Endothelial cell of umbilical vein (primary cell): ENCODE measurements at regions of chr15 and their contacts with region 1.

Region 1: GRCh38 chr15:75647370-75648155 is at the start of gene SNX33:
- DNase-seq: peak; percentile 76
- H3K4me3 ChIP-seq: peak within 1 kb of the TSS; percentile 53 to 72 (median 64)
- H3K27ac ChIP-seq: peak within 1 kb of the TSS; percentile 37
- H3K4me1 ChIP-seq: peaks cover 29% of the 10 kb centered on the region
- H3K27me3 ChIP-seq: no peaks in the 10 kb centered on the region
- CTCF ChIP-seq: peak; percentile 67 to 74
- POLR2A ChIP-seq: no peak
- total RNA-seq, gene SNX33: 10.6 and 12.6 TPM in 2 replicates

Region 2: GRCh38 chr15:75367913-75368688 is 279.5 kb before region 1 on chr15 and contains the start of gene MAN2C1:
- CTCF ChIA-PET with region 1: interaction called, 13 read pairs
- POLR2A ChIA-PET with region 1: no interaction called
- dilution Hi-C with region 1: no loop called
- intact Hi-C with region 1: no loop called
- DNase-seq: peak; percentile 93
- H3K4me3 ChIP-seq: peak within 1 kb of the TSS; percentile 50 to 83 (median 51)
- H3K27ac ChIP-seq: peak within 1 kb of the TSS; percentile 79
- H3K4me1 ChIP-seq: peaks cover 15% of the 10 kb centered on the region
- H3K27me3 ChIP-seq: no peaks in the 10 kb centered on the region
- CTCF ChIP-seq: peak; percentile 63 to 76
- POLR2A ChIP-seq: peak; percentile 93
- total RNA-seq, gene MAN2C1: 248 TPM in 2 replicates

Region 3: GRCh38 chr15:75578948-75579920 is 68.3 kb before region 1 on chr15 and contains the start of gene PTPN9:
- CTCF ChIA-PET with region 1: interaction called, 11 read pairs
- POLR2A ChIA-PET with region 1: no interaction called
- dilution Hi-C with region 1: no loop called
- intact Hi-C with region 1: no loop called
- DNase-seq: peak; percentile 73
- H3K4me3 ChIP-seq: peak within 1 kb of the TSS; percentile 64 to 99 (median 97)
- H3K27ac ChIP-seq: peak within 1 kb of the TSS; percentile 68
- H3K4me1 ChIP-seq: peaks cover 11% of the 10 kb centered on the region
- H3K27me3 ChIP-seq: no peaks in the 10 kb centered on the region
- CTCF ChIP-seq: peak; percentile 16 to 54
- POLR2A ChIP-seq: peak; percentile 34
- total RNA-seq, gene PTPN9: 31.4 and 32.0 TPM in 2 replicates

Region 4: DNA sequence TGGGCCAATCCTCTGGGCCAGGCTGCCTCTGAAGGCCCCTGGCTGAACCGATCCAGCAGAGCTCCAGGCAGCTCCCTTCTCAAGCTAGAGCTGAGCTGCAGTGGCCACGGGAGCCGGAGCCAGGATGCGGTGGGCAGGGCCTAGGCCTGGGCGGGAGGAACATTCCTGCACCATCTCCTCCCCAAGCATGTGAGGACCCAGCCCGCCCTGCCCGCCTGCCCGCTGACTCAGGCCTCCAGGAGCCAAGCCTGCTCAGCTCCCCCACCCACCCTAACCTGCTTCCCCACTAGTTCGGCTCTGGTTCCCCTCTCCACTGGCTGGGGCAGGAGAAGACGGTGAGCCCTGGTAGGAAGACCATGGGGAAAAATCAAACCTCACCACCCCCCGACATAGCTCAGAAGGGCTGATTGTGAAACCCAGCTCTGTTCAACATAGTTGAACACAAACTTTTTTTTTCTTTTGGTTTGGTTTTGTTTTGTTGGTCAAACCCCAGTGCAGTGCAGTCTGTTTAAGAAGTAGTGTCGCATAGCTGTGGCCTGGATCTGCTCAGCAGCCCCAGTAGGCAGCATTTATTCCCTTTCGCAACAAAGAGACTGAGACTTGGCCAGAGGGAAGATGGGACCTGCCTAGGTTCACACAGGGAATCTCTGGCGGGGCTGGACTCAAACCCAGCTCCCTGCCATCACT is 13.7 kb after region 1 on chr15:
- CTCF ChIA-PET with region 1: interaction called, 14 read pairs
- POLR2A ChIA-PET with region 1: interaction called, 13 read pairs
- dilution Hi-C with region 1: no loop called
- intact Hi-C with region 1: loop called (anchors 2 kb)
- DNase-seq: peak; percentile 64
- H3K4me3 ChIP-seq: no peak overlapping the region
- H3K27ac ChIP-seq: no peak overlapping the region
- H3K4me1 ChIP-seq: peaks cover 5% of the 10 kb centered on the region
- H3K27me3 ChIP-seq: no peaks in the 10 kb centered on the region
- CTCF ChIP-seq: no peak
- POLR2A ChIP-seq: no peak

Region 5: DNA sequence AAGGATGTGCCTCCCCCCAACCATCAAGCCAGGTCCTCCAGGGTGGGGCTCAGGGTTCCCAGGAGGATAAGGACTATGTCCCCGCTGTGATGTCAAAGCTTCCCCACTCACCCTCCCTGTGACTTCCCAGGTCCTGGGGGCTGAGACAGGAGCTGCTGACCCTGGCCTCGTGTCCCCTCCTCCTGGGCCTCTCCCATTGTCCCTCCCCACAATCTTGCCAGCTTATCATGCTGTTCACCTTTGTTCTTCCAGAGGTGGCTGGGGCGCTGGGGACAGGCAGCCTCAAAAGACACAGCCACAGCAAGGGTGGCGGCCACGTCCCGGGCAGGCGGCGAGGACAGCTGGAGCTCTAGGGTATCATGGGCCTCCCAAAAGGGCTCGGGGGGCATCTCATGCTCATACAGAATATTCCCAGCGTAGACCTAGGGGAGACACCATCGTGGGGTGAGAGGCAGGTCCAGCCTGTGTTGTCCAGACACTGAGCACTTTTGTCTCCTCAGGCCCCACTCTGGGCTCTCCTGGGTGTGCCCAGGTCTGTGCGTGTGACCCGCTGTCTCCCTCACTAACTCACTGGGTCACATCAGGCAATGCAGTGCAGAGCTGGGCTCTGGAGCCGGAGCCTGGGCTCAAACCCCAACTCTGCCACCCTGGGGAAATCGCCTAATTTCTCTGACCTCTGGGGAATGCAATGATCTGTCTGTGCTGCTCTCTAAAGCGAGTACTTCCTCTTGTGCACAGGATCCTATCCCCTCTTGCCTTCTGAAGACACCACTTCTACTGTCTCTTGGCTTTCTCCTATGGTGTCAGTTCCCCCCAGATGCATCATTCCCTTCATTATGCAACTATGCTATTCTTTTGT is 30.1 kb after region 1 on chr15:
- CTCF ChIA-PET with region 1: interaction called, 17 read pairs
- POLR2A ChIA-PET with region 1: no interaction called
- dilution Hi-C with region 1: no loop called
- intact Hi-C with region 1: no loop called
- DNase-seq: no peak
- H3K4me3 ChIP-seq: no peak overlapping the region
- H3K27ac ChIP-seq: no peak overlapping the region
- H3K4me1 ChIP-seq: no peaks in the 10 kb centered on the region
- H3K27me3 ChIP-seq: peaks cover 0 to 5% of the 10 kb centered on the region in 2 experiments
- CTCF ChIP-seq: no peak
- POLR2A ChIP-seq: no peak

Region 6: GRCh38 chr15:76163475-76163881 is 515.9 kb after region 1 on chr15:
- CTCF ChIA-PET with region 1: no interaction called
- POLR2A ChIA-PET with region 1: no interaction called
- dilution Hi-C with region 1: no loop called
- intact Hi-C with region 1: no loop called
- DNase-seq: no peak
- H3K4me3 ChIP-seq: no peak overlapping the region
- H3K27ac ChIP-seq: no peak overlapping the region
- H3K4me1 ChIP-seq: no peaks in the 10 kb centered on the region
- H3K27me3 ChIP-seq: peaks cover 0 to 1% of the 10 kb centered on the region in 2 experiments
- CTCF ChIP-seq: no peak
- POLR2A ChIP-seq: no peak